B cell (primary cell): ENCODE measurements at regions of chr7 and their contacts with region 1.

Region 1: DNA sequence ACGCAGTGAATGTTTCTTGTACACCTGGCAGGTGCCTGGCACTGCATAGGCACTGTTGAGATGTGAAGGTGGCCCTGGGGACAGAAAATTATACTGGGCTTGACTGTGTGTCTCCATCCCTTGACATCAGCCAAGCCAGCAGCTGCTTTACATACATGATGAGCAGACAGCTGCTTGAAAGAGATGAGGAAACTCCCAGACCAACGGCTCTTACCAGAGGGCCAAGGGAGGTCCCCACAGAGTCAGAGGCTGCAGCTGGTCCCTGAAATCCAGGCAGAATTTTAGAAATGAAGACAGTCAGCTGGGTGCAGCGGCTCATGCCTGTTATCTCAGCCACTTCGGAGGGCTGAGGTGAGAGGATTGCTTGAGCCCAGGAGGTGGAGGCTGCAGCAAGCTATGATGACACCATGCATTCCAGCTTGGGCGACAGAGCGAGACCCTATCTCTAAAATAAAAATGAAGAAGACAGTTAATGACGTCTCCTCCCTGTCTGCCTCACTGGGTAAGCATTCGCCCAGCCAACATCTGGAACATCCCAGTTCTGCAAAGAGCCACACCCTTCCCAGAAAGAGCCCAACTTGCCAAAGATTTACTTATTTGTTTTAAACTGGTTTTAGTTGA is 17.6 kb downstream of the LIMK1 start:
- DNase-seq: peak; percentile 93
- ATAC-seq: peak; percentile 81
- H3K4me3 ChIP-seq: no peak overlapping the region
- H3K4me3 Mint-ChIP-seq: peak overlapping the region; percentile 64
- H3K27ac ChIP-seq: peak overlapping the region; percentile 85 to 88
- H3K27ac Mint-ChIP-seq: peak overlapping the region; percentile 98
- H3K4me1 ChIP-seq: peaks cover 23 to 27% of the 10 kb centered on the region in 2 donors
- H3K4me1 Mint-ChIP-seq: peaks cover 34% of the 10 kb centered on the region
- H3K27me3 ChIP-seq: no peaks in the 10 kb centered on the region
- H3K27me3 Mint-ChIP-seq: no peaks in the 10 kb centered on the region
- CTCF ChIP-seq: no peak

Region 2: DNA sequence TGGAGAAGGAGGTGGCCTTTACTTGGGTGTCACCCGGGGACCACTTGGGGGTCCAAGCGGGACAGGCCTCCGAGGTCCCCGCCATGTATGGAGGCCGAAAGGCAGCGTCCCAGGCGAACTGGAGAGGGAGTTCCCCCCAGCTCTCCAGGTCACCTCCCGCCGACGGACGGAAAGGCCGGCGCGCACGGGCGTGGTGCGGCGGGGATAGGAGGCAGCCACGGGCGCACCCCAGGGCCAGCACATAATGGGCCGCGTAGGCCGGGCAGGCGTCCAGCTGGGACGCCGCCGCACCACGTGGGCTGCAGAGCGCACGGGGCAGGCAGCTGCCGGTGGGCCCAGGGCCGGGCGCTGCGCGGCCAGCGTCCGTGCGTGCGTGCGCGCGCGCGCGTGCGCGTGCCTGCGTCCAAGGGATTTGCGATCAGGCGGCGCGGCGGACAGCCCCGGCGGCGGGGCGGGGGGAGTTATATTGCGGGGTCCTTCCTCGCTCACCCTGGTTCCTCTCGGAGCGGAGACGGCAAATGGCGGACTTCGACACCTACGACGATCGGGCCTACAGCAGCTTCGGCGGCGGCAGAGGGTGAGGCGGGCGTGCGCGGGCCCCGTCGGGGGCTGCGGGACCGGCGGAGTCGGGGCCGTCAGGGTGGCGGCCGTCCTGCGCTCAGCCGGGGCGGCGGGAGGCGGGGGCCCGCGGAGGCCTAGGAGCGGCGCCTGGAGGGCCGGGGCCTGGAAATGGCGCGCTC is 72.9 kb after region 1 on chr7 and contains the start of gene EIF4H:
- CTCF ChIA-PET with region 1: interaction called, 5 read pairs
- POLR2A ChIA-PET with region 1: interaction called, 4 read pairs
- intact Hi-C with region 1: loop called (anchors 2 kb)
- DNase-seq: peak; percentile 98
- ATAC-seq: peak; percentile 84
- H3K4me3 ChIP-seq: peak within 1 kb of the TSS; percentile 67 to 93 (median 84)
- H3K4me3 Mint-ChIP-seq: peak within 1 kb of the TSS; percentile 95
- H3K27ac ChIP-seq: peak within 1 kb of the TSS; percentile 88 to 94
- H3K27ac Mint-ChIP-seq: peak within 1 kb of the TSS; percentile 98
- H3K4me1 ChIP-seq: peaks cover 44 to 52% of the 10 kb centered on the region in 2 donors
- H3K4me1 Mint-ChIP-seq: peaks cover 42% of the 10 kb centered on the region
- H3K27me3 ChIP-seq: no peaks in the 10 kb centered on the region
- H3K27me3 Mint-ChIP-seq: no peaks in the 10 kb centered on the region
- CTCF ChIP-seq: no peak
- total RNA-seq, gene EIF4H: 180 and 199 TPM in 2 replicates